PC-3 (cell line): ENCODE measurements at regions of chr19 and their contacts with region 1.

Region 1: GRCh38 chr19:17469481-17470067 is 750 bp upstream of the SLC27A1 start:
- DNase-seq: peak; percentile 97
- ATAC-seq: peak; percentile 69
- H3K4me3 ChIP-seq: peak overlapping the region; percentile 91
- H3K27ac ChIP-seq: peak overlapping the region; percentile 65
- H3K4me1 ChIP-seq: peaks cover 14% of the 10 kb centered on the region
- H3K27me3 ChIP-seq: no peaks in the 10 kb centered on the region
- CTCF ChIP-seq: no peak

Region 2: DNA sequence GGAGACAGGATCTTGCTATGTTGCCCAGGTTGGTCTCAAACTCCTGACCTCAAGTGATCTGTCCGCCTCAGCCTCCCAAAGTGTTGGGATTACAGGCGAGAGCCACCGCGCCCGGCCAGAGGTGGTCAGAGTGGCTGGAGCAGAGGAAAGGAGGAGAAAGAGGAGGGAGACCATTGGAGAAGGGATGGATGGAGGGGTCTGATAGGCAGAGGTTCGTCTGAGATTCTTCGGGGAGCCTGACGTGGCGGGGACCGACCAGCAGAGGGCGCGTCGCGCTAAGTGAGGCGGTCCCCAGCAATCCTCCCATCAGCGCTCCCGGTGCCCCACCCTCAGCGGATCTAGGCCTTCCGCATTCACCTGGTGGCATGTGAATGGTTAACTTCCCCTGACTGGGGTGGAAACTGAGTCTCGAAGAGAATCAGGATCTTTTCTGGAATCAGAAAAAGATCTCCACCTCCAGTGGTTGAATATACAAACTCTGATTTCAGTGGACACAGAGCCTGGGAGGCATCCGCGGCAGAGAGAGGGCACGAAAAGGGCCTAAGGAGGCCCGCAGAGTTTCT is 123.4 kb before region 1 on chr19:
- CTCF ChIA-PET with region 1: no interaction called
- POLR2A ChIA-PET with region 1: no interaction called
- intact Hi-C with region 1: loop called (anchors 1 kb)
- DNase-seq: peak; percentile 79
- ATAC-seq: peak; percentile 87
- H3K4me3 ChIP-seq: no peak overlapping the region
- H3K27ac ChIP-seq: no peak overlapping the region
- H3K4me1 ChIP-seq: peaks cover 10% of the 10 kb centered on the region; the same call in 1 of the 2 replicates
- H3K27me3 ChIP-seq: no peaks in the 10 kb centered on the region
- CTCF ChIP-seq: peak; percentile 85

Region 3: GRCh38 chr19:17424743-17425365 is 44.7 kb before region 1 on chr19:
- CTCF ChIA-PET with region 1: interaction called, 6 read pairs
- POLR2A ChIA-PET with region 1: no interaction called
- intact Hi-C with region 1: loop called (anchors 5 kb)
- DNase-seq: peak; percentile 25
- ATAC-seq: peak; percentile 44
- H3K4me3 ChIP-seq: no peak overlapping the region
- H3K27ac ChIP-seq: no peak overlapping the region
- H3K4me1 ChIP-seq: 0 out of 2 replicates have a peak, but pooled peaks cover 7% of the 10 kb centered on the region
- H3K27me3 ChIP-seq: no peaks in the 10 kb centered on the region
- CTCF ChIP-seq: peak; percentile 54

Region 4: DNA sequence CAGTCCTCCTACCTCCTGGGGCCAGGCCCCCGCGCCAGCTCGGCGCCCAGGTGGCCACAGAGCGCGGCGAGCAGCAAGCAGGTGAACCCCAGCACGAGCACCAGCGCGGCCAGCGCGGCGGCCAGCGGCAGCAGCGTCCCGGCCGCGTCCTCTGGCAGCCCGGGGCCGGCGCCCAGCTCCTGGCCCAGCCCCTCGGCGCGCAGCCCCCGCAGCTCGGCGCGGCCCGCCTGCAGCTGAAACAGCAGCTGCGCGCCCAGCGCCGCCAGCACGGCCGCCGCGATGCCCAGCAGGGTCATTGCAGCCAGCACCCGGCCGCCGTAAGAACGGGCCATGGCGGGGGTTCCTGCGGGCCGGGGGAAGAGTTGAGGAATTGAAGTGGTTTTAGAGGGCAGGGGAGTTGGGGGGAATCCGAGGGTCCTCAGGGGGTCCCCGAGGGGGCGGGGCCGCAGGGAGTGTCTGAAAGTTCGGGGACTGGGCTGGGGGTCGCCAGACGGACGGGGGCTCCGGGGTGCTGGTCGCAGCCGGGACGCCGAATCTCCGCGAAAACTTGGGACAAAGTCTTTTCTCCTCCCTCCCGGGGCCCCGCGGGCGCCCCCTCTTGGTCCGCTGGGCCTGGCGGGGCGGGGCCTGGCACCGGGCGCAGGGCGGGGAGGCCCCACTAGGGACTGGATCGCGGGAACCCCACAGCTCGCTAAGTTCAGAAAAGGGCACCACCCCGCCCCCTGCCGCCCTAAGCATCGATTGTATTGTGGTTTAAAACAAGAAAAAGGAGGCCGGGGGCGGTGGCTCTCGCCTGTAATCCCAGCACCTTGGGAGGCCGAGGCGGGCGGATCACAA is 21.2 kb before region 1 on chr19 and contains the start of gene TMEM221:
- CTCF ChIA-PET with region 1: interaction called, 7 read pairs
- POLR2A ChIA-PET with region 1: no interaction called
- intact Hi-C with region 1: loop called (anchors 2 kb)
- DNase-seq: peak; percentile 54
- ATAC-seq: peak; percentile 53
- H3K4me3 ChIP-seq: peak within 1 kb of the TSS; percentile 74
- H3K27ac ChIP-seq: no peak within 1 kb of the TSS
- H3K4me1 ChIP-seq: peaks cover 9% of the 10 kb centered on the region
- H3K27me3 ChIP-seq: no peaks in the 10 kb centered on the region
- CTCF ChIP-seq: peak; percentile 66
- total RNA-seq, gene TMEM221: 1.7 and 3.0 TPM in 2 replicates